ENCODE measurements at regions of chr2 and their contacts with region 1.

Region 1: DNA sequence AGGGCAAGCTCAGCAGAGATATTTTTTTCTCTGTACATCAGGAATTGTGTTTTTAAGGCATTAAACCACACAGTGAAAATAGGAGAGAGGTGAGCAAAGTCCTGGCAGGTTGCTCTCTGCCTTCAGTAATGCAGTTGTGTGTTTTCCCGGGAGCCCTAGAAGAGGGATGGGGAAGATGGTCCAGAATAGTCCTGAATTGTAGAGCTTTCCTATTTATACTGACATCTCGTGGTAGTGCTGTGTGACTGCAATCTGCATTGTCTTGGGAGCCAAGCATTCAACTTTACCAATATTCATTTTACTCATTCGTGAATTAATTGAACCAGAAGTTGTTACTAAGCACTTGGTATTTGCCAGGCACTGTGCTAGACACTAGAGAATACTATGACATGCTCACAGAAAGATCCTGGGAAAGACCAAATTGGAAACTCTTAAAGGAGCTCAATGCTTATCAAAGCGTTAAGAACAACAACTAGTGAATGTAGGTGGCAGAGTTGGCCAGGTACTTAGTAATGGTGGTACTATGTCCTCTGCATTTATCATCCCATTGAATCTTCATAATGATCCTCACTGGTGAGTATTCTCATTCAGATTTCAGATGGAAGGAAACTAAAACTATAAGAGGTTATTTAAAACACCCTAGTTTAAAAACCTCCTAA is 214.6 kb downstream of the TRIB2 start:
- DNase-seq: peak in 1 of 5 donors; percentile 25
- H3K4me3 ChIP-seq: no peak overlapping the region
- H3K4me3 Mint-ChIP-seq: no peak overlapping the region
- H3K27ac ChIP-seq: no peak overlapping the region
- H3K27ac Mint-ChIP-seq: no peak overlapping the region
- H3K4me1 ChIP-seq: no peaks in the 10 kb centered on the region
- H3K4me1 Mint-ChIP-seq: peaks cover 5 to 15% (median 7%) of the 10 kb centered on the region in 3 donors
- H3K27me3 ChIP-seq: no peaks in the 10 kb centered on the region
- H3K27me3 Mint-ChIP-seq: peaks cover 0 to 1% of the 10 kb centered on the region in 2 donors

Region 2: GRCh38 chr2:12722447-12723316 is 208.6 kb before region 1 on chr2:
- CTCF ChIA-PET with region 1: interaction called, 45 read pairs
- POLR2A ChIA-PET with region 1: interaction called, 9 read pairs
- DNase-seq: no peak
- H3K4me3 ChIP-seq: peak overlapping the region; percentile 33
- H3K4me3 Mint-ChIP-seq: peak overlapping the region; percentile 93 to 100 (median 99)
- H3K27ac ChIP-seq: no peak overlapping the region
- H3K27ac Mint-ChIP-seq: peak overlapping the region in 6 of 8 donors; percentile 6 to 88 (median 60)
- H3K4me1 ChIP-seq: peaks cover 78% of the 10 kb centered on the region
- H3K4me1 Mint-ChIP-seq: peaks cover 81 to 88% (median 85%) of the 10 kb centered on the region in 3 donors
- H3K27me3 ChIP-seq: no peaks in the 10 kb centered on the region
- H3K27me3 Mint-ChIP-seq: no peaks in the 10 kb centered on the region

Region 3: GRCh38 chr2:12728221-12728777 is 203.0 kb before region 1 on chr2:
- CTCF ChIA-PET with region 1: interaction called, 18 read pairs
- POLR2A ChIA-PET with region 1: no interaction called
- DNase-seq: peak; percentile 26 to 82 (median 77)
- H3K4me3 ChIP-seq: peak overlapping the region; percentile 35
- H3K4me3 Mint-ChIP-seq: peak overlapping the region; percentile 44 to 92 (median 73)
- H3K27ac ChIP-seq: peak overlapping the region; percentile 20
- H3K27ac Mint-ChIP-seq: peak overlapping the region; percentile 75 to 97 (median 90)
- H3K4me1 ChIP-seq: peaks cover 80% of the 10 kb centered on the region
- H3K4me1 Mint-ChIP-seq: peaks cover 88 to 99% (median 98%) of the 10 kb centered on the region in 3 donors
- H3K27me3 ChIP-seq: no peaks in the 10 kb centered on the region
- H3K27me3 Mint-ChIP-seq: no peaks in the 10 kb centered on the region

Region 4: DNA sequence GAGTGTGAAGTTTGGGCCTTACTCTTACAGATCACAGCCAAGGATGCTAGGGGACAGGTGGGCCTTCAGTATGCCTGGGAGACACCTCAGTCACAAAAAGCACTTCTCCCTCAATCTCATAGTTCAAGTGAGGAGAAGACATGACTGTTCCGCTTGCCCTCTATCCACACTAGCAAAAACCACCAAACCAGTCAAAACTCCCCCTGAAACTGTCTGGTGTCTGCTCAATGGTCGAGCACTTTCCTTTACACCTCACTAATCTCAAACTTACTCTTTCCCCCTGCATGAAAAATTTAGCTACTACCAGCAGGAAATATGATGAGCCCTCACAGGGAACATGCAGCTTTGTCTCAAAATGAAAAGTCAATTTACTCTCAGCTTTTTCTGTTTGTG is 17.6 kb after region 1 on chr2:
- CTCF ChIA-PET with region 1: interaction called, 22 read pairs
- POLR2A ChIA-PET with region 1: no interaction called
- DNase-seq: no peak
- H3K4me3 ChIP-seq: no peak overlapping the region
- H3K4me3 Mint-ChIP-seq: peak overlapping the region in 4 of 7 donors; percentile 12 to 60 (median 16)
- H3K27ac ChIP-seq: no peak overlapping the region
- H3K27ac Mint-ChIP-seq: peak overlapping the region; percentile 18 to 91 (median 82)
- H3K4me1 ChIP-seq: peaks cover 10% of the 10 kb centered on the region
- H3K4me1 Mint-ChIP-seq: peaks cover 16 to 35% (median 23%) of the 10 kb centered on the region in 3 donors
- H3K27me3 ChIP-seq: no peaks in the 10 kb centered on the region
- H3K27me3 Mint-ChIP-seq: peaks cover 0 to 2% of the 10 kb centered on the region in 2 donors

Region 5: DNA sequence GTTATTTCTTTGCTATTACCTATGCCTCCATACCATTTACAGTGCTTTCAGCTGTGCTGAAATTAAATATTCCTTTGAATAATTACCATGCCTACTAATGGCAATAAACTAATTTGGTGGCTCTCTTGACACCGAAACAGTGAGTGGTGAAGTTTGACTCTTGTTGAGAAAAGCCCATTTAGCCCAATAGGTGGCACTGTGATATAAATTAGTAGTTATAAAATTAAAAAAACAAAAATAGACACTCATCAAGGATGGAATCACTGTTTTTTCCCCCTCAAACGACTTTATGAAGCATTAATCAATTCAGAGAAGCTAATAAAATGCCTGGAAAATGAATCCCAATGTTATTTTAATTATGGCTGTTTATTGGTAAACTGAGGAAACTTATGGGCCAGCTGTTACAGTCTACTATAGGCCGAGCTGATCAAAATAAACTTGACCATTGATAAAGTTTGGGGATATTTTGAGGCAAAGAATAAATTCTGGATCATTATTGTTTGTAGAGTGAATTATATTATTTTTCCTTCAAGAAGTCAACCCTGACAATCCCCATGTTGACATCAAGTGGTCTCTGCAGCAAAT is 125.0 kb after region 1 on chr2:
- CTCF ChIA-PET with region 1: no interaction called
- POLR2A ChIA-PET with region 1: no interaction called
- DNase-seq: no peak
- H3K4me3 ChIP-seq: no peak overlapping the region
- H3K4me3 Mint-ChIP-seq: no peak overlapping the region
- H3K27ac ChIP-seq: no peak overlapping the region
- H3K27ac Mint-ChIP-seq: no peak overlapping the region
- H3K4me1 ChIP-seq: no peaks in the 10 kb centered on the region
- H3K4me1 Mint-ChIP-seq: no peaks in the 10 kb centered on the region
- H3K27me3 ChIP-seq: no peaks in the 10 kb centered on the region
- H3K27me3 Mint-ChIP-seq: peaks cover 16 to 46% of the 10 kb centered on the region in 2 donors